Sigmoid colon (tissue), 7 donors: ENCODE measurements at regions of chrX and their contacts with region 1.

Region 1: DNA sequence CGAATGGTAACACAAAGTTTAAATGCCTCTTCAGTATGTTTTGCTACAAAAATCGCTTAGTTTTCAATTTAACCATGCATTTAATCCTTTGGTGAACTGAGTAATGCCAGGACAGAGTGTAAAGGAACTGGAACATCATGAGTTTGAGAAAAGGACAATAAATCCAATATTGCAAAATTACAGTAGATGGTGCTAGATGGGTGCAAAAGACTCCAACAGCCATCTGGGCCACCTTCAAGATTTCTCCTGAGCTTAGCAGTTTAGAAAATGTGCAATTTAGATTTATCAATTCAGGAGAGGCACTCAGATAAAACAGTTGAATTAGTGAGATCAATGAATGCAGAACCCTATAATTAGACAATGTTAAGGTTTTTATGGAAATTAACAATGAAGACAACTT is 33.2 kb upstream of the MID1IP1 start:
- DNase-seq: no peak
- H3K4me3 ChIP-seq: no peak overlapping the region
- H3K27ac ChIP-seq: no peak overlapping the region
- H3K4me1 ChIP-seq: no peaks in the 10 kb centered on the region
- H3K27me3 ChIP-seq: no peaks in the 10 kb centered on the region
- CTCF ChIP-seq: peak in 3 of 4 experiments; percentile 29 to 31 (median 31)
- EP300 ChIP-seq: no peak
- POLR2A ChIP-seq: no peak

Region 2: DNA sequence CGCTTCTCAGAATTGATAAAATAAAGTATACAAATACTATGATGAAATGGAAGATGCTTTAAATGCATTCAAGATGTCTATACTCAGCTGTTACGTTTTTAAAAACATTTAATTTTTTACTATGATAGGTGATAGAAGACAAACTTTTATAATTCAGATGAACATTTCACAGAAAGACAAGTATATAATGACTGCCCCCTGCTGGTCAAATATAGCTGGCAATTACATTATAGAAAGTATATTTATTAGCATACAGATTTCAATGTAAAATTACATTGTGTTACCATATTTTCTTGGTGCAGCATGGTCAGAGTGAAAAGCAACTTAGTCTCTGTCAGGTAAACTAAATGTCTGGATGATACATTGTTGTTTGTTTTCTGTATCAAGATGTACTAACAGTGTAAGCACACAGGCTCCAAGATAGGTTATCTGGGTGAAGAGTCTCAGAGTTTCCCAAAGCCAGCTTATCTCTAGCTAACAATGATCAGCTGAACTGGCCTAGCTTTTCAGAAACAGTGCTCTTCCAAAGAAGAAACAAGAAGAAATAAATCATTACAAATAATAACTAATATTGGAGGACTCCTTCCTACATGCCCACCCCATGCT is 601.5 kb before region 1 on chrX:
- intact Hi-C with region 1: no loop called
- DNase-seq: no peak
- H3K4me3 ChIP-seq: no peak overlapping the region
- H3K27ac ChIP-seq: no peak overlapping the region
- H3K4me1 ChIP-seq: no peaks in the 10 kb centered on the region
- H3K27me3 ChIP-seq: no peaks in the 10 kb centered on the region
- CTCF ChIP-seq: peak in 2 of 4 experiments; percentile 24 to 43
- EP300 ChIP-seq: no peak
- POLR2A ChIP-seq: no peak

Region 3: DNA sequence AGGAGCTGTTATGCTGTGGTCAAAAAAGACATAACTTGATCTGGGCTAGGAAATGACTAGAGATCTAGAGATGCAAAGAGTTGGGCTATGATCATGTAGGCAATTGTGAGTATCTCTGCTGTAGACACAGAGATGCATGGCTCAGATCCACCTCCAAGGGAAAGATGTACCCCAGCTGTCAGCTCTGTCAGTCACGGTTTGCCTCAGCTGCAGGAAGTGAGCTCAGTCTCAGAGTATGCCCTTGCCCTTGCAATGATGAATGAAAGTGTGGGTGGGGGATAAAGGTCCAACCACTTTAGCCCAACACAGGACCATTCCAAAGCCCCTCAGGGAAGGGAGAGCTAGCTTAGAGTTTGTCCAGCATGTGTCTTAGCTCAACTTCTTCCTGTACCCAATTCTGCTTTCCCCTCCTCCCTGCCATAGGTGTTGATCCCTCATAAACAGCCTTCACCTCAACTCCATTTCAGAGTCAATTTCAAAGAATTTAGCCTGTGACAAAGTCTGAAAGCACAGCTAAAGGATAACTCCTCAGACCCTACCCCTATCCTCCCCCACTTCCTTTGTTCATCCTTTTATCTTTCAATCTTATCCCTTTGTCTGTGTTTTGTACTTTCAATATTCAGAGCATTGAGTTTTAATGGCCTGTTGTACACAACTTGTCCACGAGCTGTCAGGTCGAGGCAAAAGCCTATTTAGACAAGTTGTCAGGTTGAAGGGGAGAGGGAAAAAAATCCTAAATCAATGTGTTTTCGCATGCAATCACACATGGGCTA is 123.7 kb after region 1 on chrX:
- intact Hi-C with region 1: no loop called
- DNase-seq: no peak
- H3K4me3 ChIP-seq: no peak overlapping the region
- H3K27ac ChIP-seq: no peak overlapping the region
- H3K4me1 ChIP-seq: no peaks in the 10 kb centered on the region
- H3K27me3 ChIP-seq: no peaks in the 10 kb centered on the region
- CTCF ChIP-seq: no peak
- EP300 ChIP-seq: no peak
- POLR2A ChIP-seq: no peak

Region 4: DNA sequence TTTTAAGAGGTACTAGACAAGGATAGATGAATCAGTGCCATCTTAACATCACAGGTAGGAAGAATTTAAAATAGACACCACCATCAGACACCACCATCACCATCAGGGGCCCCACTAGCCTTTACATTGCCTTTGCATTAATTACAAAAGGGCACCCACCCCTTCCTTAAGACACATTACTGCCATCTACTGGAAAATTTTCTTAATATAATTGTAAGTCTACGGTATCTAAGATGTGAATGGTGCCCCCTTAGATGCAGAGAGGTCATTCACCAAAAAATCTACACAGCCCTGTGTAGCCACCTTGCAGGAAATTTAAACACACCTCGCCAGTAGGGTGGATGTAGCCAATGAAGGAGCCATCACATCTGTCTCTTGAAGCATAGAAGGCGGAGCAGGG is 217.3 kb after region 1 on chrX:
- intact Hi-C with region 1: loop called (anchors 10 kb)
- DNase-seq: no peak
- H3K4me3 ChIP-seq: no peak overlapping the region
- H3K27ac ChIP-seq: no peak overlapping the region
- H3K4me1 ChIP-seq: no peaks in the 10 kb centered on the region
- H3K27me3 ChIP-seq: no peaks in the 10 kb centered on the region
- CTCF ChIP-seq: peak in 1 of 4 experiments; percentile 12
- EP300 ChIP-seq: no peak
- POLR2A ChIP-seq: no peak

Region 5: DNA sequence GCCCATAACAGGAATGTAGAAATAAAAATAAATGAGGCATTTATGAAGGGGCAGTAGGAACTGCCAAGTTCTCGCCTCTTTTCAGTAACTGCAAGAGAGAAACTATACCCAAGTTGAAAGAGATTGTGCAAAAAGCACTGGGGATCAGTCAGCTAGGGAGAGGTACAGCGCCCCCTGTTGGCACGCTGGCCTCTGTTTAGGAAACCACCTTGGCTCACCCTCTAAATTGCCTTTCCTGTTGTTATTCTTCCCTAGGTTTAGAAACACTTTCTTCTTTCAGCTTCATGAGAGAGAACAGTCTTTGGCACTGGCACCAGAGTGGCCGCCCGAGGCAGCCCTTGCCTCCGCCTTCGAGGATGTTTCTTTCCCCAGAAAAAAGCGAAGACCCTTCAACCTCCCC is 381.7 kb after region 1 on chrX:
- intact Hi-C with region 1: loop called (anchors 5 kb)
- DNase-seq: peak; percentile 77
- H3K4me3 ChIP-seq: no peak overlapping the region
- H3K27ac ChIP-seq: no peak overlapping the region
- H3K4me1 ChIP-seq: no peaks in the 10 kb centered on the region
- H3K27me3 ChIP-seq: no peaks in the 10 kb centered on the region
- CTCF ChIP-seq: peak; percentile 32 to 51 (median 43)
- EP300 ChIP-seq: no peak
- POLR2A ChIP-seq: no peak

Region 6: DNA sequence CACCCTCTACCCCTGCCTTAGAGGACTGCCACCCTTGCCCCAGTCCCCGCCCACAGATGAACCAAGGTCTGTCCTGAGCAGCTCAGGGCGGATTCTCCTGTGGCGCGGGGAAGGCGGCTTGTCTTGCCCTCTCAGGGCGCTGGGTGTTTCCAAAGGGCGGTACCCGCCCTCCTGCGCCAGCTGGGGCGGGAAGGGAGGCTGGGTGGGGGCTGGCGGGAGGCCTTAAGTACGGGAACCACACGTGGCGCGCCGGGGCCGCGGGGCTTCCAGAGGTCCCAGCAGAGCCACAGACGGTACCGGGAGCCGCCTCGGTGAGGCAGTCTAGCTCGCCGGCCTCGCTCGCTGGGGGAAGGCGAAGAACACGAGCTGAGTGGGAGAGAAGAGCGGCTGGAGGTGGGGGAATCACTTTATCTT is 394.2 kb after region 1 on chrX:
- intact Hi-C with region 1: no loop called
- DNase-seq: no peak
- H3K4me3 ChIP-seq: peak overlapping the region in 3 of 4 donors; percentile 8 to 17 (median 12)
- H3K27ac ChIP-seq: no peak overlapping the region
- H3K4me1 ChIP-seq: peaks cover 0 to 8% (median 0%) of the 10 kb centered on the region in 4 donors
- H3K27me3 ChIP-seq: no peaks in the 10 kb centered on the region
- CTCF ChIP-seq: peak in 1 of 4 experiments; percentile 15
- EP300 ChIP-seq: no peak
- POLR2A ChIP-seq: no peak